RWPE1 (cell line): ENCODE measurements at regions of chr12 and their contacts with region 1.

Region 1: GRCh38 chr12:111715279-111715678 is 29.4 kb downstream of the ACAD10 start:
- DNase-seq: no peak
- H3K27ac ChIP-seq: peak overlapping the region; percentile 40
- CTCF ChIP-seq: no peak

Region 2: DNA sequence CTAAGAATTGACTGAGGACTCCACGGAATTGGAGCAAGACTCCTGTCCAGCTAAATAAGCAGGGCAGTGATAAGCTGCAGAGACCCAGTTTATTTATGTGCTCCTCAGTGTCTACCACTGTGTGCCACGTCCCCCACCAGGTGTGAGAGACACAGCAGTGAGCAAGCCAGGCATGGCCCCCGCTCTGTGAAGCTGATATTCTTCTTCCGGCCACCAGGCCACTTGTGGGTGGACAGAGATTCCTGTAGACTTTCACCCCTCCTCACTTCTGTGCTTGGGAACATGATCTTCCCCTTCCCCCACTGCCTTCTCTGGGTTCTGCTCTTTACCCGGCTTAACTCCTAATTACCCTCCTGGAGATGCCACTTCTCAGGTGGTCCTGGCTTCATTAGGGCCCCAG is 50.8 kb before region 1 on chr12:
- CTCF ChIA-PET with region 1: no interaction called
- POLR2A ChIA-PET with region 1: no interaction called
- DNase-seq: no peak
- H3K27ac ChIP-seq: no peak overlapping the region
- CTCF ChIP-seq: no peak

Region 3: DNA sequence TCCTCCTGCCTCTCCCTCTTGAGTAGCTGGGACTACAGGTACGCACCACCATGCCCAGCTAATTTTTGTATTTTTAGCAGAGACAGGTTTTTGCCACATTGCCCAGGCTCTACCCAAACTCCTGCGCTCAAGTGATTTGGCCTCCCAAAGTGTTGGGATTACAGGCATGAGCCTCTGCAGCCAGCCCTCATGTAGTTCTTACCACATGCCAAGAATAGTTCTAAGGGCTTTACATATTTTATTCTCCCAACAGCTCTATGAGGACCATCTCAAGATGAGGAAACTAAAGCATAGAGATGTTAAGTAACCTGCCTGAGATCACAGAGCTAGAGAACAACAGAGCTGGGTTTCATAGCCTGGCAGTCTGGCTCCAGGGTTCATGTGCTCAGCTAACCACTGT is 13.5 kb after region 1 on chr12:
- CTCF ChIA-PET with region 1: no interaction called
- POLR2A ChIA-PET with region 1: interaction called, 10 read pairs
- DNase-seq: no peak
- H3K27ac ChIP-seq: no peak overlapping the region
- CTCF ChIP-seq: no peak